ENCODE measurements at regions of chr22 and their contacts with region 1.

Region 1: GRCh38 chr22:36757668-36758211 is 18.2 kb downstream of the IFT27 start:
- DNase-seq: peak; percentile 63 to 92
- H3K4me3 ChIP-seq: no peak overlapping the region
- H3K27ac ChIP-seq: no peak overlapping the region
- H3K4me1 ChIP-seq: peaks cover 0 to 7% (median 0%) of the 10 kb centered on the region in 4 experiments; a peak in 2 of 7 replicates
- H3K27me3 ChIP-seq: peaks cover 0 to 3% (median 0%) of the 10 kb centered on the region in 4 experiments; a peak in 2 of 7 replicates
- CTCF ChIP-seq: peak; percentile 90 to 95 (median 95)
- EP300 ChIP-seq: no peak
- POLR2A ChIP-seq: no peak
- RAD21 ChIP-seq: peak; percentile 83 to 91

Region 2: GRCh38 chr22:36552289-36552688 is 205.5 kb before region 1 on chr22:
- CTCF ChIA-PET with region 1: interaction called, 43 read pairs
- POLR2A ChIA-PET with region 1: no interaction called
- DNase-seq: no peak
- H3K4me3 ChIP-seq: no peak overlapping the region
- H3K27ac ChIP-seq: no peak overlapping the region
- H3K4me1 ChIP-seq: peaks cover 0 to 9% (median 3%) of the 10 kb centered on the region in 4 experiments; a peak in 3 of 7 replicates
- H3K27me3 ChIP-seq: no peaks in the 10 kb centered on the region
- CTCF ChIP-seq: no peak
- EP300 ChIP-seq: no peak
- POLR2A ChIP-seq: no peak
- RAD21 ChIP-seq: no peak

Region 3: GRCh38 chr22:36730176-36730858 is 27.4 kb before region 1 on chr22:
- CTCF ChIA-PET with region 1: interaction called, 22 read pairs
- POLR2A ChIA-PET with region 1: no interaction called
- DNase-seq: no peak
- H3K4me3 ChIP-seq: no peak overlapping the region
- H3K27ac ChIP-seq: no peak overlapping the region
- H3K4me1 ChIP-seq: no peaks in the 10 kb centered on the region; a peak in 1 of 7 replicates
- H3K27me3 ChIP-seq: peaks cover 0 to 3% (median 0%) of the 10 kb centered on the region in 4 experiments; a peak in 2 of 7 replicates
- CTCF ChIP-seq: no peak
- EP300 ChIP-seq: no peak
- POLR2A ChIP-seq: no peak
- RAD21 ChIP-seq: no peak

Region 4: DNA sequence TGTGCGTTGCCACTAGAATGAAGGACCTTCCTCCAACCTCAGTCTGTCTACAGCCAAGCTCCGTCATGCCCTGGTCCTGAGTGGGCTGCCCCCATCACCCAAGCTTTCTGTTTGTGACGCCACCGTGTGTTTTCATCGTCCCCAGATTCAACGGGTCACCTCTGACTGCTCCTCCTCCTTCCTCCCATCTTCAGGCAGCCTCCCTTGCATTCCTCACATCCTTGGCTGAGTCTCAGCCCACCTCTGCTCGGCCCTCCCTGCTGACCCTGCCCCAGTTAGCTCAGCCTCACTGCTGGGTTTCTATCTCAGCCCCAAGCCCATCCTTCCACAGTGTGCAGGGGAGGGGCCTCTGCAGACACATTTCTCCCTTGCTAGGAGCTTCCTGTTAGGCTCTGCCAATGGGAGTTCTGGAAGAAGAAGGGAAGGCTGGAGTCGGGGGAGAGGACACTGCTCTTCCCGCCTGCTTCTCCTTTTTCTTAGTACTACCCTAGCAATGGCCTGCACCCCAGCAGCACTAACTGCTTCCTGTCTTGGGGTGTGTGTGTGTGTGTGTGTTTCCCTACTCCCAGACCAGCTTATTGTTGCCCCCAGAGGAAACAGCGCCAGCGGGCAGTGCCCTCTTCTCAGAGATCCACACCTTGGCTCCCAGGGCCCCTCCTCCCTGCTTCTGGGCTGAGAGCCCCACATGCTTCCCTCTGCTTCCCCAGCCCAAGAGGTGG is 12.9 kb after region 1 on chr22:
- CTCF ChIA-PET with region 1: interaction called, 39 read pairs
- POLR2A ChIA-PET with region 1: interaction called, 3 read pairs
- DNase-seq: no peak
- H3K4me3 ChIP-seq: no peak overlapping the region
- H3K27ac ChIP-seq: no peak overlapping the region
- H3K4me1 ChIP-seq: peaks cover 0 to 4% (median 2%) of the 10 kb centered on the region in 4 experiments; a peak in 3 of 7 replicates
- H3K27me3 ChIP-seq: no peaks in the 10 kb centered on the region
- CTCF ChIP-seq: no peak
- EP300 ChIP-seq: no peak
- POLR2A ChIP-seq: no peak
- RAD21 ChIP-seq: no peak

Region 5: DNA sequence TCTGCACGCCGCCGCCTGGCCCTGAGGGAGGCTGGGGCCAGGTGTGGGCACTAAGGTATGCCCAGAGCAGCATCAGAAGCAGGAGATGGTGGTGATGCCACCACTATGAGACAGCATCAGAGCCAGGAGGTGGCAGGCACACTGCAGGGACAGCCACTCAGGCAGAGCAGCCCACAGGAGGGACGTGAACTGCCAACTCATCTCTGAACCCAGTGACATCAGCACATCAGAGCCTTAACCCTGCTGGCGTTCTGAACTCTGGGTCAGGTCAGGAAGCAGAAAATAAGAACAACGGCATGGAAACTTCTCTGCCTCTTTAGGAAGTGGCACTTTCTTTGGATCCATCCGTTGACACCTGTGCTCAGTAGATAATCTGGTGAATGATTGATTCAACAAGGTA is 32.9 kb after region 1 on chr22:
- CTCF ChIA-PET with region 1: interaction called, 17 read pairs
- POLR2A ChIA-PET with region 1: no interaction called
- DNase-seq: no peak
- H3K4me3 ChIP-seq: no peak overlapping the region
- H3K27ac ChIP-seq: no peak overlapping the region
- H3K4me1 ChIP-seq: peaks cover 0 to 3% (median under 1%) of the 10 kb centered on the region in 4 experiments; a peak in 1 of 7 replicates
- H3K27me3 ChIP-seq: no peaks in the 10 kb centered on the region
- CTCF ChIP-seq: no peak
- EP300 ChIP-seq: no peak
- POLR2A ChIP-seq: no peak
- RAD21 ChIP-seq: no peak